PC-9 (cell line): ENCODE measurements at regions of chr5 and their contacts with region 1.

Region 1: DNA sequence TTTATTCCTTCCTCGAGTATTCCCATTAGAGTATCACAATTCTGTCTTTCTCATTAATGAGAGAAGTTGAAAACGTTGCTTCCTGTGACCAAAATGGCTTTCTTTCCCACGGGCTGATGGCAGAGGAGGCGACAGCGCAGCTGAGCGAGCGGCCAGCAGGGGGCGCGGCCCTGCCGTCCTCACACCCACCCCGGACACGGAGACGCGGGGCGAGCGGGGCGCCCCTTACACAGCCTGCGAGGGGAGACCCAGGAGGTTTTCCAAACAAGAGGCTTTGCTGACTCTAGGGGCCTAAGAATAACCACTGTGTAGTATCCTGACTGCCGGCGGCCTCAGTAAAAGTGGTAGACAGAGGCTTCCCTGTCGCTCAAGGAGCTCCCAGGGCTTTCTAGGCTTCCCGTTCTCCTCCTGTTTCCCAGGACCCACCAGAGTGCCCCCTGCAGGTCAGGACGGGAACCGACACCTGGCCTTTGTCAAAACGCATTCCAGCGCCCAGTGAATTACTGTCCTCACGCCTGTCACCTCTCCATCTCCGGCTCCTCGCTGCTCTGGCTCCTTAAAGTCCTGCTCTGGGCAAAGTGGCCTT is 27.3 kb upstream of the FGF1 start:
- DNase-seq: peak; percentile 75 to 90
- H3K4me3 ChIP-seq: peak overlapping the region; percentile 72; the same call in 1 of the 2 replicates
- H3K27ac ChIP-seq: peak overlapping the region; percentile 46
- H3K4me1 ChIP-seq: no peaks in the 10 kb centered on the region; the same call in 1 of the 2 replicates
- H3K27me3 ChIP-seq: no peaks in the 10 kb centered on the region
- CTCF ChIP-seq: peak; percentile 99

Region 2: DNA sequence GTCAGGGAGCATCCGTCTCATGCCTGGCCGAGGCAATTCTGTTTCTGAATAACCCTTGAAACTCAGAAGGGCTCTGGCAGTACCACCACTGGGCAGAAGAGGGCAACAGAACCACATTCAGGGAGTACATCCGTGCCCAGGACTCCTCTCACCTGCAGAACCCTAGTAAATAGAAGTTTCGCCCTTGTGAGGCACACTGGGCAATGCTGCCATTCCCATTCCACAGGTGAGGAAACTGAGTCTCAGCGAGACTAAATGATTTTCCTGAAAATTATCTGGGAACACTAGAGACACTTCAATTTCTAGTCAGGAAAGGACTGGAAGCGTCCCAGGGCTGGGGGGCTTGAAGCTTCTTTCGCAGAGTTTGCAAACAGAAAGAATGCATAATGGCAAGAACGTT is 102.1 kb before region 1 on chr5:
- CTCF ChIA-PET with region 1: no interaction called
- POLR2A ChIA-PET with region 1: no interaction called
- intact Hi-C with region 1: loop called (anchors 5 kb)
- DNase-seq: peak; percentile 49 to 72
- H3K4me3 ChIP-seq: no peak overlapping the region
- H3K27ac ChIP-seq: no peak overlapping the region
- H3K4me1 ChIP-seq: no peaks in the 10 kb centered on the region
- H3K27me3 ChIP-seq: no peaks in the 10 kb centered on the region
- CTCF ChIP-seq: peak; percentile 79

Region 3: GRCh38 chr5:142655339-142656267 is 57.6 kb before region 1 on chr5:
- CTCF ChIA-PET with region 1: interaction called, 13 read pairs
- POLR2A ChIA-PET with region 1: no interaction called
- intact Hi-C with region 1: loop called (anchors 1 kb)
- DNase-seq: peak; percentile 52 to 78
- H3K4me3 ChIP-seq: no peak overlapping the region
- H3K27ac ChIP-seq: no peak overlapping the region
- H3K4me1 ChIP-seq: no peaks in the 10 kb centered on the region
- H3K27me3 ChIP-seq: no peaks in the 10 kb centered on the region
- CTCF ChIP-seq: peak; percentile 97

Region 4: GRCh38 chr5:142888469-142889085 is 175.4 kb after region 1 on chr5:
- CTCF ChIA-PET with region 1: interaction called, 22 read pairs
- POLR2A ChIA-PET with region 1: no interaction called
- intact Hi-C with region 1: loop called (anchors 1 kb)
- DNase-seq: peak; percentile 28 to 50
- H3K4me3 ChIP-seq: no peak overlapping the region
- H3K27ac ChIP-seq: no peak overlapping the region
- H3K4me1 ChIP-seq: peaks cover 28% of the 10 kb centered on the region
- H3K27me3 ChIP-seq: no peaks in the 10 kb centered on the region
- CTCF ChIP-seq: peak; percentile 83

Region 5: DNA sequence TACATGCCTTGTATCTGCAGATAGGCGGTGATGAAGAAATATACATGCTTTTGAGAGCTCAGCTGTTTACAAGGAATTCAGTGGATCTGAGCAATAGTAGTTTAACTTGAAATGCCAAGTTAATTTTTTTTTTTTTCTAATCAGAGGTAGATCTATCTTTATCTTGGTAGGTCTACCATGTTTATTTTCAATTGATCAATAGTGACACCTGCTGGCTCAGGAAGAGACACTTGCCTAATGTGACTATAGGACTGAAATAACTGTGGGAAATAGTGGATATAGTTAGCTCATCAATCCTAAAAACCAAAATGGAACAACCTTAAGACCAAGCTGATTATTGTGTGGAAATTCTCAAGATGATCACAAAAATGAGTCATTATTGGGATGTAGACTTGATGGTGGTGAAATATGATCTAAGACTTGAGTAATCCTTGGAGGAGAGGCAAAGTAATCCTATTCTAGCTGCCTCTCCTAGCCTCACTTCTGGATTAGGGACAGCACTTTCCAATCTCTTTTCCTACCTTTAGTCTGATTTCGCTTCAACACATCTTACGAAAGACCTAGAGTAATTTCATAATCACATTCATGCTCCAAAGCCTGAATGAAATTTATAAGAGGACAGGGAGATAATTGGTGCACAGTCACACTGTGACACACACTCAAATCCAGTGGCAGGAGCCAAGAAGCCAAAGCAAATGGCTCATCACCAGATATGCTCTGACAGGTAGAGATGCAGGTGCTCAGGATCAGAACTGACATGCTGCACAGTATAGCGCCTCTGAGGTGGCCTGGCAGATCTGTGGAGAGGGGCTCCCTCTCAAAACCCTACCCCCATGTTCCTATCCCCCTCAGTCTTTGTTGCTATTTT is 1255.0 kb after region 1 on chr5:
- CTCF ChIA-PET with region 1: no interaction called
- POLR2A ChIA-PET with region 1: no interaction called
- intact Hi-C with region 1: loop called (anchors 2 kb)
- DNase-seq: peak; percentile 21 to 79
- H3K4me3 ChIP-seq: no peak overlapping the region
- H3K27ac ChIP-seq: peak overlapping the region; percentile 47; the same call in 1 of the 2 replicates
- H3K4me1 ChIP-seq: peaks cover 46% of the 10 kb centered on the region
- H3K27me3 ChIP-seq: no peaks in the 10 kb centered on the region
- CTCF ChIP-seq: peak; percentile 68